Caco-2 (cell line): ENCODE measurements at regions of chr6 and their contacts with region 1.

Region 1: GRCh38 chr6:153032255-153032882 is 29.9 kb upstream of the MTRF1L start:
- DNase-seq: no peak
- H3K4me3 ChIP-seq: no peak overlapping the region
- H3K4me3 Mint-ChIP-seq: no peak overlapping the region
- H3K27ac Mint-ChIP-seq: no peak overlapping the region
- H3K4me1 ChIP-seq: no peaks in the 10 kb centered on the region
- H3K4me1 Mint-ChIP-seq: peaks cover 6% of the 10 kb centered on the region
- H3K27me3 ChIP-seq: no peaks in the 10 kb centered on the region
- H3K27me3 Mint-ChIP-seq: peaks cover 2% of the 10 kb centered on the region
- CTCF ChIP-seq: peak; percentile 32 to 37

Region 2: GRCh38 chr6:153108315-153108714 is 75.9 kb after region 1 on chr6:
- CTCF ChIA-PET with region 1: interaction called, 5 read pairs
- POLR2A ChIA-PET with region 1: no interaction called
- intact Hi-C with region 1: loop called (anchors 1 kb)
- DNase-seq: peak in 1 of 2 experiments; percentile 12
- H3K4me3 ChIP-seq: no peak overlapping the region
- H3K4me3 Mint-ChIP-seq: no peak overlapping the region
- H3K27ac Mint-ChIP-seq: no peak overlapping the region
- H3K4me1 ChIP-seq: no peaks in the 10 kb centered on the region
- H3K4me1 Mint-ChIP-seq: no peaks in the 10 kb centered on the region
- H3K27me3 ChIP-seq: no peaks in the 10 kb centered on the region
- H3K27me3 Mint-ChIP-seq: peaks cover 19% of the 10 kb centered on the region
- CTCF ChIP-seq: peak in 1 of 2 experiments; percentile 41

Region 3: GRCh38 chr6:153162172-153162571 is 129.8 kb after region 1 on chr6:
- CTCF ChIA-PET with region 1: no interaction called
- POLR2A ChIA-PET with region 1: no interaction called
- intact Hi-C with region 1: no loop called
- DNase-seq: no peak
- H3K4me3 ChIP-seq: no peak overlapping the region
- H3K4me3 Mint-ChIP-seq: no peak overlapping the region
- H3K27ac Mint-ChIP-seq: no peak overlapping the region
- H3K4me1 ChIP-seq: no peaks in the 10 kb centered on the region
- H3K4me1 Mint-ChIP-seq: no peaks in the 10 kb centered on the region
- H3K27me3 ChIP-seq: no peaks in the 10 kb centered on the region
- H3K27me3 Mint-ChIP-seq: no peaks in the 10 kb centered on the region
- CTCF ChIP-seq: no peak

Region 4: DNA sequence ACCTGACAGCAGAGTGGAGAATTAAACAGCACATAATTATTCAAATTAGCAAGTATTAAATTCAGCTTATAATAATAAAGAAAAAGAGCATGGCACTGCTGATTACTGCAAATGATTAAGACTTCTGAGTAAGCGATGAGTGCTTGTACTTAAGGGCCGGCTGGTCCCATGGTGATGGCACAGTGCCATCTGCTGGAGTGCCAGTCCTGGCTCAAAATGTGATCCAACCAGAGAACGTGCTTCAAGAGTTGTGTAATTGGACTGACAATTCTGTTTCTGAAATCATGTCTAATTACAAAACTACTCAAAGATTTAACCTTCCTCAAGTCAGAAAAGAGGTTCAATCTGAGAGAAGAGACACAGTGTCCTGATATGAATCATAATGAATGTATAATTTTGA is 280.3 kb after region 1 on chr6:
- CTCF ChIA-PET with region 1: no interaction called
- POLR2A ChIA-PET with region 1: no interaction called
- intact Hi-C with region 1: loop called (anchors 1 kb)
- DNase-seq: peak in 1 of 2 experiments; percentile 37
- H3K4me3 ChIP-seq: no peak overlapping the region
- H3K4me3 Mint-ChIP-seq: no peak overlapping the region
- H3K27ac Mint-ChIP-seq: no peak overlapping the region
- H3K4me1 ChIP-seq: no peaks in the 10 kb centered on the region
- H3K4me1 Mint-ChIP-seq: no peaks in the 10 kb centered on the region
- H3K27me3 ChIP-seq: no peaks in the 10 kb centered on the region
- H3K27me3 Mint-ChIP-seq: peaks cover 11% of the 10 kb centered on the region
- CTCF ChIP-seq: peak; percentile 33 to 60

Region 5: GRCh38 chr6:153511896-153512496 is 479.6 kb after region 1 on chr6:
- CTCF ChIA-PET with region 1: interaction called, 5 read pairs
- POLR2A ChIA-PET with region 1: no interaction called
- intact Hi-C with region 1: loop called (anchors 2 kb)
- DNase-seq: peak in 1 of 2 experiments; percentile 45
- H3K4me3 ChIP-seq: no peak overlapping the region
- H3K4me3 Mint-ChIP-seq: no peak overlapping the region
- H3K27ac Mint-ChIP-seq: no peak overlapping the region
- H3K4me1 ChIP-seq: no peaks in the 10 kb centered on the region
- H3K4me1 Mint-ChIP-seq: no peaks in the 10 kb centered on the region
- H3K27me3 ChIP-seq: no peaks in the 10 kb centered on the region
- H3K27me3 Mint-ChIP-seq: no peaks in the 10 kb centered on the region
- CTCF ChIP-seq: peak; percentile 41 to 60